ENCODE measurements at regions of chr1 and their contacts with region 1.

Region 1: GRCh38 chr1:192808518-192809306 is at the start of gene RGS2:
- DNase-seq: peak; percentile 91
- H3K4me3 Mint-ChIP-seq: peak within 1 kb of the TSS; percentile 83
- H3K27ac Mint-ChIP-seq: peak within 1 kb of the TSS; percentile 77
- H3K4me1 Mint-ChIP-seq: peaks cover 32% of the 10 kb centered on the region
- H3K27me3 Mint-ChIP-seq: no peaks in the 10 kb centered on the region
- total RNA-seq, gene RGS2: 5.4 to 6.4 TPM

Region 2: GRCh38 chr1:192477630-192478029 is 331.1 kb before region 1 on chr1:
- CTCF ChIA-PET with region 1: interaction called, 16 read pairs
- POLR2A ChIA-PET with region 1: interaction called, 3 read pairs
- intact Hi-C with region 1: loop called (anchors 5 kb)
- DNase-seq: no peak
- H3K4me3 Mint-ChIP-seq: no peak overlapping the region
- H3K27ac Mint-ChIP-seq: no peak overlapping the region
- H3K4me1 Mint-ChIP-seq: no peaks in the 10 kb centered on the region
- H3K27me3 Mint-ChIP-seq: no peaks in the 10 kb centered on the region

Region 3: DNA sequence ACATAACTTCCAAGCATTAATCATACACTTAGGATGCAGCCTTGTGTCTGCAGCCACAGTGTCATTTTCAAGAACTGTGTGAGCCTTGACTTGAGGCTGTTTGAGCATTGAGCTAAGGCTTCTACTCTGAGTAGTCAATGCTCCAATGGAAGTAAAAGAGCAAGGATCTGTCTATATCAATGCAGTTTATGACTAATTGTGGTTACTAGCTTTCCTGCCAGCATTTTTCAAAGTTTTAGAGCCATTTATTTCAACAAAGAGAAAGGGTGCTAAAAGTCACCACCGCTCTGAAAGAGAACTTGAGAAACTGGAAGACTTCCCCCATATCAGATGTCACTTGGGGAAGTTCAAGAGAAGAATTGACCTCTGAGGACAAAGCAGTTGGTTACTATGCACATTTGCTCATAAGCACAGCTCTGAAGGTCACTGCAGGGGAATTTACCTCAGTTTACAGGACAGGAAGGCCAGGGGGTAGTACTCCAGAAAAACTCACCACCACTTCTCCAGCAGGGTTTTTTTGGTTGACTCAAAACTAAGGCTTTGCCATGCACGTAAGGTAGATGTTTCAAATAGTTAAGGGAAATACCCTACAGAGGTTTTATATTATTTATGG is 257.7 kb before region 1 on chr1:
- CTCF ChIA-PET with region 1: no interaction called
- POLR2A ChIA-PET with region 1: no interaction called
- intact Hi-C with region 1: loop called (anchors 5 kb)
- DNase-seq: peak; percentile 27
- H3K4me3 Mint-ChIP-seq: peak overlapping the region; percentile 12
- H3K27ac Mint-ChIP-seq: peak overlapping the region; percentile 81
- H3K4me1 Mint-ChIP-seq: peaks cover 55% of the 10 kb centered on the region
- H3K27me3 Mint-ChIP-seq: no peaks in the 10 kb centered on the region

Region 4: DNA sequence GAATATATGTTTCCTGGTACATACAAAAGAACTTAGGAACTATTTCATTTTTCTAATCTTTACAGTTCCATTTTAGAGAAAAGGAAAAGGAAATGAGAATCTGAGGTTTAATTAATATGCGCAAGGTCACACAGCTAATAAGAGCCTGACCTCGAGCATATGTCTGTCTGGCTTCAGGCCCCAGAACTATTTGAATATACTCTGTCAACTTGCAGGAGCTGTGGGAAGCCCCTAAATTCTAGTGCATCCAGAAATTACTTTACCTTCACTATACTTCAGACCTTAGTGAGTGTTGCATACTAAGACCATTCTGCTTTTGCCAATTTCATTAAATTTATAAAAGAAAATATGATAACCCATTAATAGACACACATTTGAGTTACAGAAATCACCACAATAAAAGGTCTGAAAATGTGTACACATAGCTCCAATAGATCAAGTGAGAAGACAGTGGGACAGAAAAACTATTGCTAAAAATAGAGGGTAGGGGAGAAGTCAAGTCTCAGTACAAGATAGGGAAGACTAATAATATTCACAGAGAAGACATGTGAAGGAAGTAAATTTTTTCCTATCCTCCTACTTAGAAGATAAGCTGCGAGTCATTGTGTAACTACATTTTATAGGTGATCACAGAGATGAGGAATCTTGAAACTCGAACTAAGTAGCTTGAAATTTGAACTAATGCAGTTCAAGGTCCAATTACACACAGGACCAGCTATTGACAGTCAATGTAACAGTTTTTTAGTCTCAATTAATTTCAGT is 168.9 kb before region 1 on chr1:
- CTCF ChIA-PET with region 1: interaction called, 4 read pairs
- POLR2A ChIA-PET with region 1: interaction called, 3 read pairs
- intact Hi-C with region 1: loop called (anchors 1 kb)
- DNase-seq: no peak
- H3K4me3 Mint-ChIP-seq: no peak overlapping the region
- H3K27ac Mint-ChIP-seq: no peak overlapping the region
- H3K4me1 Mint-ChIP-seq: peaks cover 17% of the 10 kb centered on the region
- H3K27me3 Mint-ChIP-seq: peaks cover 5% of the 10 kb centered on the region

Region 5: DNA sequence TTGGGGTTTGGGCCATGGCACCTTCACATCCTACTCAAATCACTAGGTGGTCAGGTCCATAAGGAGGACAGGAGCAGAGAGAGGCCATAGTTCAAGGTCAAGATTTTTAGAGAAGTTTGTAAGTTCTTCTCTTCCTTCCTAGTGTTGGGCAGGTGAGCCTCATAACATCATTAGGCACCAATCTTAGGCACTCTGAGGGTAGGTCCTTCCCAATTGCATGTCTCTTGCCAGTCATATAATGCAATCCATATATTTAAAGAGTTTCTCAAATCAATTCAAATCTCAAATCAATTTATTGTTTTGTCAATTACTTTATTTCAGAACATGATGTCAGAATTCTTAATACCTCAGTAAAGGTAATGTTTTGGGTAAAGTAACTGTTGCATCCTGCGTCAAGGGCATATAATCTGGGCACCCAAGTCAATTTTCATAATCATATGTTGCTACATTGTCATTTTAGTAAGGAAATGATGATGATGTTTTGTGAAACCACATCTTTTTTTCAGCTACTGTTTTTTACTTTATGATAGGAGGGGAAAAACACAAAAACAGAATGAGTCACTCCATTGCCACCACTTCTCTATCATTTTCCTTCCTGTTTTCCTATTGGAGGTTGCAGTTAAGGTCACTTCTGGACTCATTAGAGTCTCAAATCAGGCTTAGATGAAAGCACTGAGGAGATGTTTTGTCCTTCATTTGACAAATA is 127.8 kb after region 1 on chr1:
- CTCF ChIA-PET with region 1: interaction called, 4 read pairs
- POLR2A ChIA-PET with region 1: interaction called, 3 read pairs
- intact Hi-C with region 1: loop called (anchors 1 kb)
- DNase-seq: no peak
- H3K4me3 Mint-ChIP-seq: no peak overlapping the region
- H3K27ac Mint-ChIP-seq: peak overlapping the region; percentile 36
- H3K4me1 Mint-ChIP-seq: peaks cover 20% of the 10 kb centered on the region
- H3K27me3 Mint-ChIP-seq: no peaks in the 10 kb centered on the region

Region 6: GRCh38 chr1:193059268-193060225 is 250.8 kb after region 1 on chr1 and contains the starts of genes RO60 and UCHL5:
- CTCF ChIA-PET with region 1: interaction called, 17 read pairs
- POLR2A ChIA-PET with region 1: interaction called, 22 read pairs
- intact Hi-C with region 1: loop called (anchors 1 kb)
- DNase-seq: peak; percentile 98
- H3K4me3 Mint-ChIP-seq: peak within 1 kb of the TSS; percentile 92
- H3K27ac Mint-ChIP-seq: peak within 1 kb of the TSS; percentile 98
- H3K4me1 Mint-ChIP-seq: peaks cover 57% of the 10 kb centered on the region
- H3K27me3 Mint-ChIP-seq: peaks cover 1% of the 10 kb centered on the region
- total RNA-seq, gene RO60: 56.5 to 65.8 TPM
- total RNA-seq, gene UCHL5: 72.1 to 77.5 TPM

Region 7: DNA sequence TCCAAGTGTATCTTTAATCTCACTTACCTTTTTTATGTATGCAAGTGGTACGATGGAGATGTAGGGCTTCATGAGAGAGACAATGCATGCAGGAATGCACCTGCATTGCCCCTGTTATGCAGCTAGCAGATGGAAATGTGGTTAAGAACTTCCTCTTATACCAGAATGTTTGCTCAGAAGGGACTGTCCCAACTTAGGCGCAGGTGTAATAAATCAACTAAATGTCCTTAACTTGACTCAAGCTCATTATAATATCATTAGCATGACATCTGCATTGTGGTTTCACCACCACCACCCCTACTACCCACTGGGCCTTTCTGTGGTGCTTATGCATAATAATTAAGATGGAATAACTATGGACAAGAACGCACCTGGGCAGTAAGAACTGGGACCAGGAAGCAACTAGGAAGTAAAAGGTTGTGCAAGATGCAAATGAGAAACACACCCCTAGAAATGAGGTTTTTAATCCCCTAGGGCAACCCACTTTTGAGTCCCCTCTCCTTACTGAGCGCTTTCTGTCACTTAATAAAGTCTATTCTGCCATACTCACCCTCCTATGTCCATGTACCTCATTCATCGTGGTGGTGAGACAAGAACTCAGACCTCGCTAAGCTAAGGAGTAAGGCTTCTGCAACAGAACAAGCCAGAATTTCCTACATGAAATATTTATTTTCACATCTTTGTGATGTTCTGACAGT is 1481.0 kb after region 1 on chr1:
- CTCF ChIA-PET with region 1: no interaction called
- POLR2A ChIA-PET with region 1: no interaction called
- intact Hi-C with region 1: loop called (anchors 2 kb)
- DNase-seq: peak; percentile 64
- H3K4me3 Mint-ChIP-seq: peak overlapping the region; percentile 43
- H3K27ac Mint-ChIP-seq: no peak overlapping the region
- H3K4me1 Mint-ChIP-seq: peaks cover 33% of the 10 kb centered on the region
- H3K27me3 Mint-ChIP-seq: no peaks in the 10 kb centered on the region

Measured in activated CD4-positive, alpha-beta memory T cell treated with anti-CD3 and anti-CD28 coated beads for 36 hours (primary cell).